ENCODE measurements at regions of chr22 and their contacts with region 1.

Region 1: DNA sequence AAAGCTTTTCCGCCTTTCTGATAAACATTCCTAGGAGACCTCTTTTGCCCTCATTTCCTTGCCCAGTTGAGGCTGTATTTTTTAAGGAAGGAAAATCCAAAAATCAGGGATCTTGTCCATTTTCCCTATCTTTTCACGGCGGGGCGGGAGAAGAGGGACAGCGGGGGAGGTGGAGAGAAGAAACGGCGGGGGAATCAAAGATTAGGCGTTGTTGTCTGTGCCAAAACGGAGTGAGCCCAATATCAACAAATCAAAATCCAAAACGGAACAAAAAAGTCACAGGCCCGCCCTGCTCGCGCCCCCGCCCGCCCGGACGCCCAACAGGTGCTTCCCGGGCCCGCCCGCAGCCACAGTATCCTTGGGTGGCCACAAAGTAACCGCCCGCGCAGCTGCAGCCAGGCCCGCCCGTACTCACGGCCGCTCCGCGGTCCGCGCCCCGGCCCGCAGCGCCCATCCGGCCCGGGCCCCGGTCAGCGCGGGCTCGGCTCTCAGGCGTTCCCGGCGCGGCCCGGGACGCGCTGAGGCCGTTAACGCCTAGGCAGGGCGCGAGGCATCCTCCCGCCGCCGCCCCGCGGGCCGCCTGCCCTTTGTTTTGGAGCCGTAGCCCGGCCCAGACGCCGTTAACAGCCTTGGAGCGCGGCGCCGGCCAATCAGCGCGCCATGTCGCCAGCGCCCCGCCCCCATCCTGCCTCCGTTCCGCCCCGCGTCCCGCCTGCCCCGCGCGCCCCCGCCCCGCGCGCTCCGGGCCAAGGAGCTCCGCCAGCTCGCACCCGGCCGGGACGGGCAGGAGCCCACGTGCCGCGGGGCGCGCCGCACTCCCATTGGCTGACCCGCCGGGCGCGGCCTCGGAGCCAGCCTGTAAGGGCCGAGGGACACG is at the start of gene YPEL1:
- DNase-seq: peak; percentile 94 to 99 (median 97)
- H3K4me3 ChIP-seq: peak within 1 kb of the TSS; percentile 7 to 56
- H3K4me3 Mint-ChIP-seq: peak within 1 kb of the TSS; percentile 89 to 95 (median 94)
- H3K27ac ChIP-seq: peak within 1 kb of the TSS; percentile 63
- H3K27ac Mint-ChIP-seq: peak within 1 kb of the TSS; percentile 87 to 96 (median 93)
- H3K4me1 ChIP-seq: peaks cover 13% of the 10 kb centered on the region
- H3K4me1 Mint-ChIP-seq: peaks cover 15 to 21% (median 17%) of the 10 kb centered on the region in 4 donors
- H3K27me3 ChIP-seq: no peaks in the 10 kb centered on the region
- H3K27me3 Mint-ChIP-seq: no peaks in the 10 kb centered on the region
- total RNA-seq, gene YPEL1: 8.0 to 9.8 TPM

Region 2: DNA sequence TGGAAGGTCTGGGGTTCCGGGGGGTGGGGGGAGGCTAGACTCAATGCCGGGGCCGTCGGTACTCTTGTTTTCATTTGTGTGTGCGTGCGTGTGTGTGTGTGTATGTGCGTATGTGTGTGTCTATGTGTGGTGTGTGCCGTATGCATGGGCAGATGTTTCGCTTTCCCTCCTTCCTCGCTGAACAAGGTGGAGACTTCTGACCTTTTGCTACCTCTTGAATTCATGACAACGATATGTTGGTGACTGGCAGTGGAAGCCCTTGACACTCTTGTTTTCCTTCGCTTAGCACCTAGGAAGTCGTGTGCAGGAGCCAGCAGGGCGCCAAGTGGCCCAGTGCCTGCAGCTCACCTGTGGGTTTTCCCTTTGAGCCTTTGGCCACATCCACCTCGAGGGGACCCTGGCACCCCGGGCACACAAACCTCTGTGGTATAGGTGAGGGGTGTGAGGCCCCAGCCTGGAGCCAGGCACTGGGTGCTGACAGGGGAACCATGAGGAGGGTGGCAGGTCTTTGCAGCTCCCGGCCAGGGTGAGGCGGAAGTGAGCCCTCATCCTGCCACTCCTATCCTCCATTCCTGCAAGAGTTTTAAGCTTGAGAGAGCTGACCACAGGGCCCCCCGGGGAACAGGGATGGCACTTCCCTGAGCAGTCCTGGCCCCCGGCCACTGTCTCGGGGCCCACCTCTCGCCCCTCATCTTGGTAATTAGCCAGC is 287.6 kb before region 1 on chr22:
- CTCF ChIA-PET with region 1: no interaction called
- POLR2A ChIA-PET with region 1: no interaction called
- intact Hi-C with region 1: no loop called
- DNase-seq: no peak
- H3K4me3 ChIP-seq: no peak overlapping the region
- H3K4me3 Mint-ChIP-seq: no peak overlapping the region
- H3K27ac ChIP-seq: no peak overlapping the region
- H3K27ac Mint-ChIP-seq: no peak overlapping the region
- H3K4me1 ChIP-seq: no peaks in the 10 kb centered on the region
- H3K4me1 Mint-ChIP-seq: peaks cover 0 to 2% (median 0%) of the 10 kb centered on the region in 4 donors
- H3K27me3 ChIP-seq: no peaks in the 10 kb centered on the region
- H3K27me3 Mint-ChIP-seq: no peaks in the 10 kb centered on the region

Region 3: DNA sequence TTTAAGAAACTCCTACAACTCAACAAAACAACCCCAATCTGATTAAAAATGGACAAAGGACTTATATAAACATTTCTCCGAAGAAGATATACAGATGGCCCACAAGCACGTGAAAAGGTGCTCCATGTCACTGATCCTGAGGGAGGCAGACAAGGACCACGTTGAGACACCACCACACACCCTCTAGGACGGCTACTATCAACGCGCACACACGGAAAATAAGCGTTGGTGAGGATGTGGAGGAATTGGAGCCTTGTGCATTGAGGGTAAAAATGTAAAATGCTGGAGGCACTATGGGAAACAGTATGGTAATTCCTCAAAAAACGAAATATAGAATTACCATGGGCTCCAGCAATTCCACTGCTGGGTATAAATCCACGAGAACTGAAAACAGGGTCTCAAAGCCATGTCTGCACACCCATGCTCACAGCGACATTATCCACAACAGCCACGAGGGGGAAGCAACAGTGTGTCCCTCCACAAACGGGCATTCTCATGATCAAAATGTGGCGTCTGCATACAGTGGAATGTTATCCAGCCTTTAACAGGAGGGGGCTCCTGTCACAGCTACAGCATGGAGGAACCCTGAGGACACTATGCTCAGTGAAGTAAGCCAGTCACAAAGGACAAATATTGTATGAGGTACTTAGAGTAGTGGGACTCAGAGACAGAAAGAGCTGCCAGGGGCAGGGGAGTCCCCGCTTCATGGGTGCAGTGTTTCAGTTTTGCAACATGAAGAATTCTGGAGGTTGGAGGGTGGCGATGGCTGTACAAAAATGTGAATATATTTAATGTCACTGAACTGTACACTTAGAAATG is 22.3 kb before region 1 on chr22:
- CTCF ChIA-PET with region 1: no interaction called
- POLR2A ChIA-PET with region 1: no interaction called
- intact Hi-C with region 1: no loop called
- DNase-seq: peak; percentile 52 to 67 (median 62)
- H3K4me3 ChIP-seq: no peak overlapping the region
- H3K4me3 Mint-ChIP-seq: peak overlapping the region in 3 of 8 donors; percentile 36 to 60 (median 58)
- H3K27ac ChIP-seq: no peak overlapping the region
- H3K27ac Mint-ChIP-seq: peak overlapping the region in 6 of 7 donors; percentile 1 to 79 (median 70)
- H3K4me1 ChIP-seq: no peaks in the 10 kb centered on the region
- H3K4me1 Mint-ChIP-seq: peaks cover 3 to 13% (median 9%) of the 10 kb centered on the region in 4 donors
- H3K27me3 ChIP-seq: no peaks in the 10 kb centered on the region
- H3K27me3 Mint-ChIP-seq: no peaks in the 10 kb centered on the region

Region 4: DNA sequence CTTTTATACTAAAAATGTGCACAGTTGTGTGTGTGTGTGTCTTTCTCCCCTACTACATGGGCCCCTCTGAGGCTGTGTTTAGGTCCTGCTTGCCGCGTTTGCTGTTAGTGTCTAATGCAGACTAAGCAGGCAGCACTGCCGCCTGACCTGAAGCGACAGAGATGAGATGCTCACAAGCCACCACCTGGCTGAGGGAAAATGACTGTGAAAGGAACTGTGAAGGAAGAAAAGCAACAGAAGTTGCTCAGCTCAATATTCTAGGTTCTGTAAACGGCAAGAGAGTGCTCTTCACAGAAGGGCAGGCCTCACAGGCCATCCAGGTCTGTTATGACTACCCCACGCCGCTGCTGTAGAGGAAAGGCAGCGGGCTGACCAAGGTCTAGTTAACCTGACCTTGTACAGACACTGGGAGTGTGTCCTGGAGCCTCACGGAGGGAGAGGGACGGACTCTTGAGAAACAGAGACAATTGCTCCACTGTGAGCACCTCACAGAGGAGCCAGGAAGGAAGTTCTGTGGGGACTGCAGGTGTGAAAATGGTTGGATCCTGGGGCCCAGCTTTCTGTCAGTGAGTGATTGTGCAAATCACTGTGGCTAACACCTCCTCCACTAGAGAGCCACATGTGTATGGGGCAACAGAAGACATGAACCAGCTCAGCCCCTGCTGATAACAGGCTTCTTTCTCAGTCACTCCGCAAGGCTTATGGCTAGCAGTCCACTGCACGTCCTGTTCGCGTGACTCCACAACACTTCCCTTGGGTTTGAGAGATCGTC is 31.4 kb after region 1 on chr22:
- CTCF ChIA-PET with region 1: interaction called, 3 read pairs
- POLR2A ChIA-PET with region 1: interaction called, 33 read pairs
- intact Hi-C with region 1: no loop called
- DNase-seq: peak; percentile 61 to 81 (median 65)
- H3K4me3 ChIP-seq: no peak overlapping the region
- H3K4me3 Mint-ChIP-seq: peak overlapping the region in 7 of 8 donors; percentile 59 to 86 (median 73)
- H3K27ac ChIP-seq: peak overlapping the region; percentile 41
- H3K27ac Mint-ChIP-seq: peak overlapping the region; percentile 91 to 95 (median 94)
- H3K4me1 ChIP-seq: peaks cover 69% of the 10 kb centered on the region
- H3K4me1 Mint-ChIP-seq: peaks cover 50 to 69% (median 62%) of the 10 kb centered on the region in 4 donors
- H3K27me3 ChIP-seq: no peaks in the 10 kb centered on the region
- H3K27me3 Mint-ChIP-seq: no peaks in the 10 kb centered on the region

Region 5: GRCh38 chr22:22009661-22010060 is 274.2 kb after region 1 on chr22:
- CTCF ChIA-PET with region 1: no interaction called
- POLR2A ChIA-PET with region 1: no interaction called
- intact Hi-C with region 1: no loop called
- DNase-seq: no peak
- H3K4me3 ChIP-seq: no peak overlapping the region
- H3K4me3 Mint-ChIP-seq: no peak overlapping the region
- H3K27ac ChIP-seq: no peak overlapping the region
- H3K27ac Mint-ChIP-seq: no peak overlapping the region
- H3K4me1 ChIP-seq: no peaks in the 10 kb centered on the region
- H3K4me1 Mint-ChIP-seq: no peaks in the 10 kb centered on the region
- H3K27me3 ChIP-seq: peaks cover 8% of the 10 kb centered on the region
- H3K27me3 Mint-ChIP-seq: peaks cover 16 to 19% of the 10 kb centered on the region in 2 donors

Measured in CD4-positive, alpha-beta memory T cell (primary cell).